ENCODE measurements at regions of chr1 and their contacts with region 1.

Region 1: GRCh38 chr1:153572569-153573015 is 6.9 kb upstream of the S100A2 start:
- DNase-seq: peak; percentile 78 to 86
- ATAC-seq: peak; percentile 78 to 84
- H3K4me3 ChIP-seq: no peak overlapping the region
- H3K27ac ChIP-seq: peak overlapping the region in 1 of 2 experiments; percentile 39; a peak in 1 of 6 replicates
- H3K4me1 ChIP-seq: peaks cover 27% of the 10 kb centered on the region
- CTCF ChIP-seq: peak; percentile 92
- EP300 ChIP-seq: no peak
- POLR2A ChIP-seq: no peak
- RAD21 ChIP-seq: peak; percentile 95 to 99

Region 2: DNA sequence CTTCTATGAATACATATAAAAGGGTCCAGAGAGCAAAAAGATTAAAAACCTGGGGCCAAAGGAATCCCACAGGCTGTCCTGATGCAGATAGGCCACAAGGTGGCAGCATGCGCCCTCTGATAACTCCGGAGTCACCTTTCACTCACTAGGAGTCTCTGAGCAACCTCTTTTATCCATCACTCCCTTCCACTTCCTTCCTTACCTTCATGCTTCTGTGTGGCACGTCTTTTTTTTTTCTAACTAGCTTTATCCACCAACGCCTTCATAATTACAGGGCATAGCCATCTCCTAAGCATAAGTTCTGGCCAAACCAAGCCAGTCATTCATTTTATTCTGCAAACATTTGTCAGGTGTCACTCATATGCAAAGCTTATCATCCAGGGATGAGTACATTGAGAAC is 220.1 kb before region 1 on chr1:
- CTCF ChIA-PET with region 1: interaction called, 27 read pairs
- POLR2A ChIA-PET with region 1: no interaction called
- DNase-seq: peak; percentile 69 to 77
- ATAC-seq: peak; percentile 60 to 76; a peak in 5 of 6 replicates
- H3K4me3 ChIP-seq: no peak overlapping the region
- H3K27ac ChIP-seq: no peak overlapping the region
- H3K4me1 ChIP-seq: no peaks in the 10 kb centered on the region
- CTCF ChIP-seq: peak; percentile 94
- EP300 ChIP-seq: no peak
- POLR2A ChIP-seq: no peak
- RAD21 ChIP-seq: peak; percentile 90 to 92

Region 3: GRCh38 chr1:153520230-153520629 is 52.4 kb before region 1 on chr1:
- CTCF ChIA-PET with region 1: interaction called, 471 read pairs
- POLR2A ChIA-PET with region 1: no interaction called
- DNase-seq: no peak
- ATAC-seq: no peak
- H3K4me3 ChIP-seq: no peak overlapping the region
- H3K27ac ChIP-seq: no peak overlapping the region
- H3K4me1 ChIP-seq: peaks cover 13% of the 10 kb centered on the region
- CTCF ChIP-seq: no peak
- EP300 ChIP-seq: no peak
- POLR2A ChIP-seq: no peak
- RAD21 ChIP-seq: no peak

Region 4: DNA sequence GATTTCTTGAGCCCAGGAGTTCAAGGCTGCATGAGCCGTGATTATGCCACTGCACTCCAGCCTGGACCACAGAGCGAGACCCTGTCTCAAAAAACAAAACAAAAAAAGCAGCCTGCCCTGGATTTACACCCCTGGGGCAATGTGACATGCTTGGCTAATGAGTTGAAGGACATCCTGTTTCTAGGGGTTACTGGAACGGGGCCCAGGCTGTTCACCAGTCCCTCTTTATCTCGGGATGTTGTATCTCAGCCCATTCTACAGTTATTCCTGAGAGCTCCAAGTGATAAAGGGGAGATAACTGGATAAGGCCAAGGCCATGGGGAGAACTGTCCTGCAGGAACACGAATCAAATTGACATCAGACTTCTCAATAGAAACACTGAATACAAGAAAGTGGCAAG is 14.7 kb after region 1 on chr1:
- CTCF ChIA-PET with region 1: interaction called, 34 read pairs
- POLR2A ChIA-PET with region 1: interaction called, 4 read pairs
- DNase-seq: no peak
- ATAC-seq: no peak
- H3K4me3 ChIP-seq: no peak overlapping the region
- H3K27ac ChIP-seq: no peak overlapping the region
- H3K4me1 ChIP-seq: 0 out of 3 replicates have a peak, but pooled peaks cover 7% of the 10 kb centered on the region
- CTCF ChIP-seq: no peak
- EP300 ChIP-seq: no peak
- POLR2A ChIP-seq: no peak
- RAD21 ChIP-seq: no peak

Region 5: GRCh38 chr1:153608742-153609584 is 36.4 kb after region 1 on chr1:
- CTCF ChIA-PET with region 1: interaction called, 253 read pairs
- POLR2A ChIA-PET with region 1: interaction called, 3 read pairs
- DNase-seq: peak; percentile 88 to 98
- ATAC-seq: peak; percentile 73 to 82
- H3K4me3 ChIP-seq: peak overlapping the region; percentile 45
- H3K27ac ChIP-seq: peak overlapping the region; percentile 91 to 96
- H3K4me1 ChIP-seq: peaks cover 44% of the 10 kb centered on the region
- CTCF ChIP-seq: no peak
- EP300 ChIP-seq: no peak; a peak in 1 of 5 replicates
- POLR2A ChIP-seq: peak; percentile 46; the same call in 1 of the 2 replicates
- RAD21 ChIP-seq: no peak; a peak in 1 of 5 replicates

Region 6: DNA sequence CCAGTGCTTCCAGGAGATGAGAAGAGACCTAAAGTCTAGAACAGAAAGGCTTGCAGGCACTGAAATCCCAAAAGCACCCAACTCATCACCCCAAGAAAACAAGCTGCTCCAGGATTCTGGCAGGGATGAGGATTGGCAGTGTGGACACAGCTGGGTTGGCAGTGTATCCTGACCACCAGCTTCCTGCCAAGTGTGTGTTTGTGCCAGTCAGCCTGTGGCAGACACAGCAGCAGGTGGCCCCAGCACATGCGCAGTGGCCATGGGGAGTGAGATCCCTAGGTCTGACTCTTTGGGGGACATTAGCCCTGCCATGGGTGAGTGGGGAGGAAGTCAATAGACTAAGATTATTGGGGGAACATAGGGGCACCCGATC is 77.3 kb after region 1 on chr1:
- CTCF ChIA-PET with region 1: interaction called, 35 read pairs
- POLR2A ChIA-PET with region 1: interaction called, 6 read pairs
- DNase-seq: no peak
- ATAC-seq: peak; percentile 47 to 53
- H3K4me3 ChIP-seq: no peak overlapping the region
- H3K27ac ChIP-seq: no peak overlapping the region
- H3K4me1 ChIP-seq: peaks cover 6% of the 10 kb centered on the region; the same call in 1 of the 3 replicates
- CTCF ChIP-seq: no peak
- EP300 ChIP-seq: no peak
- POLR2A ChIP-seq: no peak
- RAD21 ChIP-seq: no peak

Region 7: GRCh38 chr1:153775458-153776327 is 203.1 kb after region 1 on chr1:
- CTCF ChIA-PET with region 1: interaction called, 13 read pairs
- POLR2A ChIA-PET with region 1: no interaction called
- DNase-seq: peak; percentile 26 to 39
- ATAC-seq: peak; percentile 51 to 77; a peak in 5 of 6 replicates
- H3K4me3 ChIP-seq: peak overlapping the region; percentile 52
- H3K27ac ChIP-seq: peak overlapping the region; percentile 13 to 71; a peak in 3 of 6 replicates
- H3K4me1 ChIP-seq: peaks cover 5% of the 10 kb centered on the region; the same call in 1 of the 3 replicates
- CTCF ChIP-seq: no peak
- EP300 ChIP-seq: no peak
- POLR2A ChIP-seq: no peak
- RAD21 ChIP-seq: no peak